Psoas muscle (tissue), 8 donors: ENCODE measurements at regions of chr1 and their contacts with region 1.

Region 1: DNA sequence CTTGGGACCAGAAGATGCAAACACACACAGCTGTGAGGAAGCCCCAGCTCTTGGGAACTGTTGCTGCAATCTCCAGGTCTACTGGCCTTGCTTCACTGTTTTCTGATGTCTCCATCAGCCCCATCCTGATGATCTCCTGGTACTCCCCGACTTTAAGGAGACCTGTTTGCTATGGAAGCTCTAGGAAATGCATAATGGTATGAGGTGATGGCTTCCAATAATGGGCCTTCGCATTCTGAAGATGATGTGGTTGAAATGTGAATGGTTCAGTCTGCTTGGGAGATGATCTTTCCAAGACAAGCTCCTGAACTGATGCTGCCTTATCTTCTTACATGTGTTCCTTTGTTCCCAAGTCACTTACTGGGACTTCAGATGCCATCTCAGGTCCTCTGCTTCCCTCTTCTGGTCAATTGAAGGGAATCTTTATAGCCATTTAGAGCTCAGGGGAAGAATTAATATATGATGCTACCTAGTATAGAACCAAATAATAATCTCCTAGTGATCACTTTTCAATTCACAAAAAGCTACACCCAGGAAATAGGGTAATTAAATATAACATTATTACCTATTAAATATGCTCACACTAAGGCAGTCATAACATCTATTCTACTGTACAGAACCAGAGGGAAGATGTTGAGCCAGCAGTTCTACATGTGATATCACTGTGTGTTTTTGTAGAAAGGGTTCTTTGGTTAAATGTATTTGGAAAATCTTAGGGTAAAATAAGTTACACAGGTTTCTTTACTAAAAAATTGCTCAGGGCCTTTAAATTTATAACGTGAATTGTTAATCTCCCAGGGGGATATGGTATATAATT is 73.9 kb upstream of the VTCN1 start:
- DNase-seq: no peak
- ATAC-seq: peak; percentile 58 to 85 (median 66)
- H3K4me3 ChIP-seq: no peak overlapping the region
- H3K27ac ChIP-seq: no peak overlapping the region
- H3K4me1 ChIP-seq: no peaks in the 10 kb centered on the region
- H3K27me3 ChIP-seq: no peaks in the 10 kb centered on the region
- CTCF ChIP-seq: peak; percentile 62

Region 2: DNA sequence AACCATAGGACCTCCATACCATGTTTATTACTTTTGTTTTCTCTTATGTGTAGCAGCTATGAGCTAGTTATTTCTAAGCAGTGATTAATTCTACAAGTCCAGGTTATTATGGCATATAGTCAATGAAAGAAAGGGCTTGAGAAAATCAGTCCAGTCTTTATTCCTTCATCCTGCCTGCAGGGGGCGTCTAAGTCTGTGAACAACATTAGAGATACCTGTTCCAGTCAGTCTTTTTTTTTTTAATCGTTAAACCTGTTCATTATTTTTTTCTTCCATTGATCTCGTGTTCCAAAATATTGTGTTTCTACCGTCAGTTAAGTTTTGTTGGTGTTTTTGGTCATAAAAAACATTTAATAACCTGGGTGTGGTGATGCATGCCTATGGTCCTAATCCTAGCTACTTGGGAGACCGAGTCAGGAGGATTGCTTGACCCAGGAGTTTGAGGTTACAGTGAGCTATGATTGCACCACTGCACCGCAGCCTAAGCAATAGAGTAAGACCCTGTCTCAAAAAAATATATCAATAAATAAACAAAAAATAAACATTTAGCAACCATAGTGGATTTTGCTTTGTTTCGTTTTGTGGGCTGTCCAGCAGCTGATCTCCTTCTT is 559.7 kb before region 1 on chr1:
- intact Hi-C with region 1: loop called in 1 of 2 experiments (anchors 10 kb)
- DNase-seq: peak in 1 of 2 donors; percentile 30
- ATAC-seq: no peak
- H3K4me3 ChIP-seq: no peak overlapping the region
- H3K27ac ChIP-seq: no peak overlapping the region
- H3K4me1 ChIP-seq: no peaks in the 10 kb centered on the region
- H3K27me3 ChIP-seq: no peaks in the 10 kb centered on the region
- CTCF ChIP-seq: peak; percentile 57

Region 3: GRCh38 chr1:117067533-117068370 is 216.9 kb before region 1 on chr1:
- intact Hi-C with region 1: loop called (anchors 2 to 5 kb)
- DNase-seq: peak; percentile 37 to 72
- ATAC-seq: peak; percentile 89 to 98 (median 96)
- H3K4me3 ChIP-seq: no peak overlapping the region
- H3K27ac ChIP-seq: no peak overlapping the region
- H3K4me1 ChIP-seq: peaks cover 2% of the 10 kb centered on the region
- H3K27me3 ChIP-seq: no peaks in the 10 kb centered on the region
- CTCF ChIP-seq: peak; percentile 89

Region 4: DNA sequence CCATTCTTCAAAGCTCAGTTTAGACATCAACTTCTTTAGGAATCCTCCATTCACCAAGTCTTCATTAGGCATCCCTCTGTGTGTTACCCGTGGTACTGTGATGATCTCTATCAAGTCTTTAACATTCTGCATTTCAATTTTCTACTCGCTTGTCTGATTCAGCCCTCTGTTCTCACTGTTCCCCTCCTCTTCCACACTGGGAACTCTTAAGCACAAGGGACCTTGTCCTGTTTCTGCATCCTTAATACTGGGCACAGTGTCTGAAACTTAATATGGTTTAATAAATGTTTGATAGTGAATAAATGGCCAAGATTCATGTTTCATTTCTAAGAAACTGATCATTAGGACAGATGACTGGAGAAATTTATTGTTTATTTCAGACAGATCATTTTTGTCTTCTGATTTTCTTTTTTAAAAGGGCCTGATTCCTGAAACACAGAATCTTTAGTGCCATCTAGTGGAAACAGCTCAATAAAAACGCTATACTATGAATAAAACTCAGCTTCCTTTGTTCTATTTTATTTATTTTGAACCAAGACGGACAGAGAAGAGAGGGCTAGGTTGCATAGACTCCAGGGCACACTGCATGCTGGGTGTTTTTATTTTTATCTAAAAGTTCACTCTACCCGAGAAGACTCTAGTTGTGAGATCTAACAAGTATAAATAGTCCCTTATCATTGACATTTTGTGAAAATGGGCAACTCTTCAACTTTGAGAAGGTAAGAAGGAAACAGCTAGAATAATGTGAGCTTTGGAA is 156.1 kb before region 1 on chr1:
- intact Hi-C with region 1: loop called in 1 of 2 experiments (anchors 5 kb)
- DNase-seq: no peak
- ATAC-seq: peak; percentile 38 to 78 (median 60)
- H3K4me3 ChIP-seq: peak overlapping the region; percentile 3
- H3K27ac ChIP-seq: no peak overlapping the region
- H3K4me1 ChIP-seq: peaks cover 14% of the 10 kb centered on the region
- H3K27me3 ChIP-seq: no peaks in the 10 kb centered on the region
- CTCF ChIP-seq: peak; percentile 58